HepG2 (cell line): ENCODE measurements at regions of chr22 and their contacts with region 1.

Region 1: DNA sequence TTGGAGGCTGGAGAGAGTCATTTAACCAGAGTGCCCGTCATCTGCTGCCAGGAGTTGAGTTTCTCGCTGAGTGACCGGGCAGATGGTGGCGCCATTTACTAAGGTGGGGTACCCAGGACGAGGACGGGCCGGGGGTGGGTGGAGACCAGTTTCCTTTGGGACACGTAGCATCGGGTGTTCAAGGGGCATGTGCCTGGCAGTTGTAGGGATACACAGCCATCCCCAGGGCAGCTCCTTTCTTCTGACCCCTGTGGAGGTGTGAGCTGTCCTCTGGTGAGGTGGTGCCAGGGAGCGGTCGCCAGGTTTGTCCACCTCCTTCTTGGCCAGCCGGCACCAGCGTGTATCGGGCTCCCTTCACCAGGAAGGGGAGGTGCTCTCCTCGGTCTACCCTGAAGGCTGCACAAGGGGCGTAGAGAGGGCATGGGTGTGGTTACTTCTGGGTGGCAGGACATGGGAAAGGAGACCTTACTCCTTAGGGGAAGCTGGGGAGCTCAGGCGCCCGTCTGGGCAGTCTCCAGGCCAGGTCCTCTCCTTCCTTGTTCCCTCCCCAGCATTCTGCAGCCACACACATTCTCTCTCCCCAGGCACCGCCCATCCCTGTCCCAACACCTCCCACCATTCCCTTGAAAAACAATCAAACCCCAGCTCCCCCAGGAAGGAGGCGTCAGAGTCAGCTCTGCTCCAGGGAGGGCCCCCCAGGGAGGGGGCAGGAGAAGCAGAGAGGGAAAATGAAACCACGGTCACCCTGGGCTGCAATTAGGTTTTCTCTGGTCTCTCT is 10.3 kb upstream of the MB start:
- DNase-seq: peak; percentile 64
- ATAC-seq: peak; percentile 78
- H3K4me3 ChIP-seq: peak overlapping the region; percentile 59 to 79 (median 59)
- H3K27ac ChIP-seq: no peak overlapping the region
- H3K4me1 ChIP-seq: peaks cover 23% of the 10 kb centered on the region
- H3K27me3 ChIP-seq: 0 out of 5 replicates have a peak, but pooled peaks cover 0 to 3% of the 10 kb centered on the region in 2 experiments
- CTCF ChIP-seq: peak; percentile 89
- EP300 ChIP-seq: no peak
- POLR2A ChIP-seq: peak in 1 of 2 experiments; percentile 47; a peak in 1 of 4 replicates
- RAD21 ChIP-seq: peak; percentile 74

Region 2: DNA sequence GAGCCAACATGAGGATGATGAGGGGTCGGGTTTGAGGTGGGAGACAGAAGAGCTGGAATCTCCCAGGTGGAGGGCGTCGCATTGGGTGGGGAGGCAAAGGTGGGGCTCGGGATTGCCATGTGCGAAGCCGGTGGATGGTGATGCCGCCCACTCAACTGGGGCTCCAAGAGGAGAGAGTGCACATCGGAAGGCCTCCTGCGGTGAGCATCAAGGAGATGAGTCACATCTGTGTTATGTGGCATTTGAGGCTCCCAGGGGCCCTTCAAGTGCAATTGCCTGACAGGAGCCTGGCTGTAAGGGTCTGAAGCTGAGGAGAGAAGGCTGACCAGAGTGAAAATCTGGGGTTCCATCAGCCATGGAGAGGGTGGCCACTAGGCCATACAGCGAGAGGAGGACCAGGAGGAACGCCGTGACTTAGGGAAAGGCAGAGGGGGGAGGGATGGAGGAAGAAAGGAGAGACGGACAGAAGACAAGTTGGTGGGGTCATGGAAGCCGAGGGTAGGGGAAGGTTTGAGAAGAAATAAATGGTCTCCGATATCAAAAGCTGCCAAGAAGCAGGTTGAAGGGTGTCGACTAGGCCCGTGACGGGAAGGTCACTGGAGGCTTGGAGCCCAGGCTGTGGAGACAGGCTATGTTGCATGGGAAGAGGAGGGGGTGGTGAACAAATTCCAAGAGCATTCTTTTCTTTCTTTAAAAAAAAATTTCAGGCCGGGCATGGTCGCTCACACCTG is 65.5 kb before region 1 on chr22:
- CTCF ChIA-PET with region 1: no interaction called
- POLR2A ChIA-PET with region 1: no interaction called
- in situ Hi-C with region 1: loop called (anchors 10 kb)
- intact Hi-C with region 1: no loop called
- DNase-seq: no peak
- ATAC-seq: no peak
- H3K4me3 ChIP-seq: no peak overlapping the region
- H3K27ac ChIP-seq: no peak overlapping the region
- H3K4me1 ChIP-seq: no peaks in the 10 kb centered on the region
- H3K27me3 ChIP-seq: peaks cover 0 to 23% of the 10 kb centered on the region in 2 experiments; a peak in 3 of 5 replicates
- CTCF ChIP-seq: no peak
- EP300 ChIP-seq: no peak
- POLR2A ChIP-seq: no peak
- RAD21 ChIP-seq: no peak

Region 3: DNA sequence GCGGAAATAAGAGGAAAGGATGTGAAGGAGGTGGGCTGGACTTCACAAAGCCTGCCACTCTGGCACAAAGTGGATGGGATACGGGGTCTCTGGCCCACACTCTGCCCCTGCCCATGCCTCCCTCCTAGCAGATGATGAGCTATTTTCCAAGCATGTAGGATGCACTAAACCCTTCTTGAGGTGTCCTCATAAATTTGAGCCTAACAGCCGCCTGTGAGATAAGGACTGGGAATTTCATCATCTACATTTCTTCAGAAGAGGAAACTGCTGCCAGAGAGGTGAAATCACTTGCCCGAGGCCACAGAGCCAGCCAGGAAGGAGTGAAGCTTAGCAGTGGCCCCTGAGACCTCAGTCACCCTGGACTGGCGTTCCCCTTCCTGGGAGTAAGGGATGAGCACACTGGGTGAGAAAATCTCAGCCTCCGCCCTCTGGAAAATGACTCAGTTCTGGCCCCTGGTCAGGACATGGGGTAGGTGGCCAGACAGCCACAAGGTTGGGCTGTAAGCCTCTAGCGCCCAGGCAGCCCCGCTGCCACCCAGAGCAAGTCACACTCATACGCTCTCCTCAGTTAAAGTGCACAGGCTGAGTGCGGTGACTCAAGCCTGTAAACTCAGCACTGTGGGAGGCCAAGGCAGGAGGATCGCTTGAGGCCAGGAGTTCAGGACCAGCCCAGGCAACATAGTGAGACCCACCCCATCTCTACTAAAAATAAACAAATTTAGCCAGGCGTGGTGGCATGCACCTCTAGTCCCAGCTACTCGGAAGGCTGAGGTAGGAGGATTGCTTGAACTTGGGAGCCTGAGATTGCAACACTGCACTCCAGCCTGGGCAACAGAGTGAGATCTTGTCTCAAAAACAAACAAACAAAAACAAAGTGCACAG is 38.1 kb before region 1 on chr22:
- CTCF ChIA-PET with region 1: no interaction called
- POLR2A ChIA-PET with region 1: no interaction called
- in situ Hi-C with region 1: no loop called
- intact Hi-C with region 1: no loop called
- DNase-seq: no peak
- ATAC-seq: peak; percentile 39; the same call in 2 of the 3 replicates
- H3K4me3 ChIP-seq: no peak overlapping the region
- H3K27ac ChIP-seq: no peak overlapping the region
- H3K4me1 ChIP-seq: peaks cover 29% of the 10 kb centered on the region
- H3K27me3 ChIP-seq: peaks cover 0 to 29% of the 10 kb centered on the region in 2 experiments; a peak in 3 of 5 replicates
- CTCF ChIP-seq: no peak
- EP300 ChIP-seq: no peak
- POLR2A ChIP-seq: no peak
- RAD21 ChIP-seq: no peak

Region 4: DNA sequence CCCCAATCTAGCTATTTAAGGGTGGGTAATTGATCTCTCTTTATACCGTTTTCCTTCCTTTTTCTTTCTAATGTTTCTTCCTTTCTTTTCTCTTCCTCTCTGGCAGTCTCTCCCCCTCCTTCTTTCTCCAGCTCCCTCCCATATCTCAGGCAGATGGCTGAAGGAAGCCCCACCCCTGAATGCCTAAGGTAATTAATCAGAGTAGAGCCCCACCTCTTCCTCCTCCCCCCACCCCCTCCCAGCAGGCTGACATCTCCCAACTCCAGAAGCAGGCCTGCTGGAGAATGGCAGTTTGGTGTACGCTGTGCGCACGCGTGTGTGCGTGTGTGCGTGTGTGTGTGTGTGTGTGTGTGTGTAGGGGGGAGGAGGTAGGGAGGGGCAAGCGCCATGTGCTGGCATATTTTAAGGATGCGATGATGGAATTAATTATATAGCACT is 212.9 kb after region 1 on chr22:
- CTCF ChIA-PET with region 1: interaction called, 5 read pairs
- POLR2A ChIA-PET with region 1: no interaction called
- in situ Hi-C with region 1: loop called (anchors 10 kb)
- intact Hi-C with region 1: loop called (anchors 2 kb)
- DNase-seq: no peak
- ATAC-seq: no peak
- H3K4me3 ChIP-seq: no peak overlapping the region
- H3K27ac ChIP-seq: no peak overlapping the region
- H3K4me1 ChIP-seq: peaks cover 20% of the 10 kb centered on the region
- H3K27me3 ChIP-seq: no peaks in the 10 kb centered on the region
- CTCF ChIP-seq: no peak
- EP300 ChIP-seq: no peak
- POLR2A ChIP-seq: no peak
- RAD21 ChIP-seq: no peak

Region 5: GRCh38 chr22:35921777-35922176 is 294.3 kb after region 1 on chr22:
- CTCF ChIA-PET with region 1: interaction called, 6 read pairs
- POLR2A ChIA-PET with region 1: no interaction called
- in situ Hi-C with region 1: loop called (anchors 5 kb)
- intact Hi-C with region 1: loop called (anchors 5 kb)
- DNase-seq: peak; percentile 75
- ATAC-seq: peak; percentile 94
- H3K4me3 ChIP-seq: no peak overlapping the region
- H3K27ac ChIP-seq: peak overlapping the region; percentile 37
- H3K4me1 ChIP-seq: peaks cover 33% of the 10 kb centered on the region
- H3K27me3 ChIP-seq: no peaks in the 10 kb centered on the region
- CTCF ChIP-seq: peak; percentile 84
- EP300 ChIP-seq: no peak
- POLR2A ChIP-seq: no peak
- RAD21 ChIP-seq: peak; percentile 56; the same call in 1 of the 2 replicates

Region 6: GRCh38 chr22:36129486-36130388 is 502.3 kb after region 1 on chr22:
- CTCF ChIA-PET with region 1: interaction called, 7 read pairs
- POLR2A ChIA-PET with region 1: interaction called, 3 read pairs
- in situ Hi-C with region 1: loop called (anchors 5 kb)
- intact Hi-C with region 1: loop called (anchors 5 kb)
- DNase-seq: no peak
- ATAC-seq: no peak
- H3K4me3 ChIP-seq: no peak overlapping the region
- H3K27ac ChIP-seq: no peak overlapping the region
- H3K4me1 ChIP-seq: peaks cover 44% of the 10 kb centered on the region
- H3K27me3 ChIP-seq: peaks cover 2 to 33% of the 10 kb centered on the region in 2 experiments; a peak in 4 of 5 replicates
- CTCF ChIP-seq: no peak
- EP300 ChIP-seq: no peak
- POLR2A ChIP-seq: no peak
- RAD21 ChIP-seq: no peak